ENCODE measurements at regions of chr5 and their contacts with region 1.

Region 1: GRCh38 chr5:126757713-126758357 is 19.1 kb upstream of the LMNB1 start:
- DNase-seq: no peak
- ATAC-seq: no peak
- H3K4me3 Mint-ChIP-seq: peak overlapping the region; percentile 24
- H3K27ac Mint-ChIP-seq: peak overlapping the region; percentile 63
- H3K4me1 Mint-ChIP-seq: peaks cover 48% of the 10 kb centered on the region
- H3K27me3 Mint-ChIP-seq: no peaks in the 10 kb centered on the region

Region 2: GRCh38 chr5:126745259-126745992 is 12.4 kb before region 1 on chr5:
- CTCF ChIA-PET with region 1: interaction called, 5 read pairs
- POLR2A ChIA-PET with region 1: interaction called, 3 read pairs
- intact Hi-C with region 1: loop called (anchors 1 kb)
- DNase-seq: no peak
- ATAC-seq: no peak
- H3K4me3 Mint-ChIP-seq: no peak overlapping the region
- H3K27ac Mint-ChIP-seq: no peak overlapping the region
- H3K4me1 Mint-ChIP-seq: peaks cover 34% of the 10 kb centered on the region
- H3K27me3 Mint-ChIP-seq: peaks cover 3% of the 10 kb centered on the region